ENCODE measurements at regions of chr3 and their contacts with region 1.

Region 1: GRCh38 chr3:66138336-66139313 is 82.2 kb upstream of the SLC25A26 start:
- DNase-seq: peak in 4 of 5 donors; percentile 28 to 44 (median 38)
- H3K4me3 ChIP-seq: no peak overlapping the region
- H3K27ac ChIP-seq: no peak overlapping the region
- H3K4me1 ChIP-seq: no peaks in the 10 kb centered on the region
- H3K27me3 ChIP-seq: no peaks in the 10 kb centered on the region
- CTCF ChIP-seq: peak in 1 of 3 donors; percentile 37
- EP300 ChIP-seq: no peak
- POLR2A ChIP-seq: no peak

Region 2: DNA sequence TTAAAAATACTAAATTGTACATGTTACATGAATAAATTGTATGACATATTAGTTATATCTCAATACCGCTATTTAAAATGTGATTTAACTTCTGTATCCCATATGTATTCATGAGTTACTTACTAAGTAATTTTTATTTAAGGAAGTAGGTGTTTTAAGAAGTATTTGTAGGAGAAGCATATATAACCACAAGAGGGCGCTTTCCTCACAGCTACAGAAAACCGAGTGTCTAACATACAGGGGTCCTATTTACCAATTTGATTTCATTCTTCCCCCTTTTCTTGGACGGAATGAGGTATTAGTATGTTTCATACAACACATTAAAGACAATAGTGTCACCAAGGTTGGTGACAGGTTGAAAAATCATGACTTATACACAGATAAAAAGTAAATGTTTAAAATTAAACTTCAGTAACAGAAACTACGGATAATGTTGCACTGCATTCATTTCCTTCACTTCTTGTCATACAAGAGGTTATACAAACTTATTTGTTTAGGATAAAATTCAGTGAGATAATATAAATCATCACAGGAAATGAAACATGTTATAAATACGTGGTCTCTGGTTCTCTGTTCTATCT is 353.5 kb before region 1 on chr3:
- intact Hi-C with region 1: loop called in 2 of 4 experiments (anchors 10 kb)
- DNase-seq: no peak
- H3K4me3 ChIP-seq: no peak overlapping the region
- H3K27ac ChIP-seq: no peak overlapping the region
- H3K4me1 ChIP-seq: peaks cover 12% of the 10 kb centered on the region
- H3K27me3 ChIP-seq: no peaks in the 10 kb centered on the region
- CTCF ChIP-seq: peak; percentile 23 to 46 (median 40)
- EP300 ChIP-seq: no peak
- POLR2A ChIP-seq: no peak

Region 3: DNA sequence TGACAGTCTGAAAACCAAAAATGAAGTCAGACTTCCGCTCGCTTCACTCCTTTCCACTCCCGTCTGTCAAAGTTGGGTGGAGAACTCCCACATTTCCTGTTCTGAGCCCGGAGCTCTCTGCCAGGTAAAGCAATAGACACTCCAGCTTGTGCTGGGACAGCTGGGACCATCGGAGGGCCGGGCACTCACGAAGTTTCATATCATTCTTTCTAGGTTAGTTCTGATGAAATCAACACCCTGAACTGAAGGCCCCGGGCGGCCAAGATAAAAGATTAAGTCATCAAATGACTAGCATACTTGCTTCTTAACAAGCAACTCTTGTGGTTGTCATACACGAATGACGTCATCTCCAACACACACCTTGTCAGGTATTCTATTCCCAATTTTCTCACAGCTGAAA is 142.0 kb before region 1 on chr3:
- intact Hi-C with region 1: no loop called
- DNase-seq: peak in 1 of 5 donors; percentile 21
- H3K4me3 ChIP-seq: no peak overlapping the region
- H3K27ac ChIP-seq: no peak overlapping the region
- H3K4me1 ChIP-seq: peaks cover 2% of the 10 kb centered on the region
- H3K27me3 ChIP-seq: no peaks in the 10 kb centered on the region
- CTCF ChIP-seq: no peak
- EP300 ChIP-seq: no peak
- POLR2A ChIP-seq: no peak

Region 4: DNA sequence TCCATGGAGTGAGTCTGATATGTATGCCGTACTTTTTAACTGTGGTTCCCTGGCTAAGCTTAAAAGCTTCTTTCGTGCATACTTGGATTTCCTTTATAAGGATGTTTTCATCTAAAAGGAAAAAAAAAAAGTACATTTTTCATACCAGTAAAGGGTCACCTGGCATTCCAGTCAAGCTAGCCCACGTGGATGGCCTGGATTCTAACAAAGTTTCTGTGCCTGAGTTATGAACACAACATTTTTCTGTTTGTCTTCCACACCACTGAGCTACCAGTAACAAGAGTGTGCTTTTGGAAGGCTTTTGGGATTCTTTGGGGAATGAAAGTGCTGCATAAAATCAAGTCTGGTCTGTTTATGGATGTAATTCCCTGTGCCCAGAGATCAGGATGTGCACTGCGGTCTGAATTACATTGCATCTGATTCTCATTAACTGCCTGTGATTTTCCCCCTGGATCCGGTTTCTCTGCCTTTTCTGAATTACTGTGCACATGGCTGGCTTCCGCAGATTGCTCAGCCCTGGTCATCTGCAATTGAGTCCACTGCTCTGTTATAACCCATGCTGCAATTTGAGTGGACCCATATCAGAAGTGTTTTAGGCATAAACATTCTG is 61.7 kb before region 1 on chr3:
- intact Hi-C with region 1: no loop called
- DNase-seq: no peak
- H3K4me3 ChIP-seq: no peak overlapping the region
- H3K27ac ChIP-seq: no peak overlapping the region
- H3K4me1 ChIP-seq: no peaks in the 10 kb centered on the region
- H3K27me3 ChIP-seq: no peaks in the 10 kb centered on the region
- CTCF ChIP-seq: no peak
- EP300 ChIP-seq: no peak
- POLR2A ChIP-seq: no peak